CD8-positive, alpha-beta T cell (primary cell): ENCODE measurements at regions of chr18 and their contacts with region 1.

Region 1: DNA sequence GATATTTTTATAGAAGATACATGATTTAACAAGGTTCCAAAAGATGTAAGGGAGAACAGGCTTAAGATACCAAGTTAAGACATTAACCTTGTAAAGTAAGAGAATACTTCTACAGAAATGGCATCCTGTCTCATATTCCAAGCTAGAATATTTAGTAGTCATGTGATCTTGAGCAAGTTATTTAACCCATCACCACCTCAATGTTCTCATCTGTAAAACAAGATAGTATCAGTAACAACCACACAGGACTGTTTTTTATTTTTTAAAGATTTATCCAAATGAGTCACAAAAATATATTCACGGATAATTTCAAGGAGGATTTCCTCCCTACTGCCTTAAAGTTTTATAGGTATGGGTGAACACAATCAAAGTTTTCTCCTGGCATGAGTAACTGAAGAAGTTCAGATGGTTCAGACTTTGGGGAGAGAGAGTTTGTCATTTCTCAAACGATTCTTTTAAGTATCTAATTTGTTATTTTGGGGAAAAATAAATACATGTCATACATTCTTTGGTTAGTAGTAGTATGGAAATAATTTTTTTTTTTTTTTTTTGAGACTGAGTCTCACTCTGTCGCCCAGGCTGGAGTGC is 25.9 kb downstream of the ROCK1 start:
- DNase-seq: no peak
- ATAC-seq: no peak
- H3K4me3 ChIP-seq: no peak overlapping the region
- H3K4me3 Mint-ChIP-seq: peak overlapping the region; percentile 13
- H3K27ac ChIP-seq: no peak overlapping the region
- H3K27ac Mint-ChIP-seq: no peak overlapping the region
- H3K4me1 ChIP-seq: peaks cover 12% of the 10 kb centered on the region
- H3K4me1 Mint-ChIP-seq: peaks cover 81% of the 10 kb centered on the region
- H3K27me3 ChIP-seq: no peaks in the 10 kb centered on the region
- H3K27me3 Mint-ChIP-seq: no peaks in the 10 kb centered on the region
- CTCF ChIP-seq: no peak

Region 2: DNA sequence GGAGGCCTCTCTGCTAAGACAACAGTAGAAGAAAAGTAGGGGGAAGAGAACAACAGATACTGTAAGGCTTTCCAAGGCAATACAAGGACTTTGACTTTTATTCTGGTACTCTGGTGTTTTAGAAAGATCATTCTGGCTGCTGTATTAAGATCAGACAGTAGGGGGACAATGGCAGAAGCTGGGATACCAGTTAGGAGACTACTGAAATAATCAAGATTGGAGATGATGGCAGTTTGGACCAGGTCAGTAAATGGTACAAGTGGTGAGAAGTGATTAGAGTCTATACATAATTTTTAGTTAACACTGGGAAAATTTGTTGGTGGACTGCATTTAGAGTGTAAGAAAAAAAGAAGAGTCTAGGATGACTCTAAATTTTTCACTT is 113.8 kb before region 1 on chr18:
- CTCF ChIA-PET with region 1: no interaction called
- POLR2A ChIA-PET with region 1: no interaction called
- intact Hi-C with region 1: no loop called
- DNase-seq: peak in 2 of 9 experiments; percentile 22 to 39
- ATAC-seq: peak; percentile 63
- H3K4me3 ChIP-seq: no peak overlapping the region
- H3K4me3 Mint-ChIP-seq: no peak overlapping the region
- H3K27ac ChIP-seq: no peak overlapping the region
- H3K27ac Mint-ChIP-seq: no peak overlapping the region
- H3K4me1 ChIP-seq: no peaks in the 10 kb centered on the region
- H3K4me1 Mint-ChIP-seq: peaks cover 3% of the 10 kb centered on the region
- H3K27me3 ChIP-seq: no peaks in the 10 kb centered on the region
- H3K27me3 Mint-ChIP-seq: no peaks in the 10 kb centered on the region
- CTCF ChIP-seq: peak; percentile 64

Region 3: GRCh38 chr18:21074336-21075323 is 11.0 kb before region 1 on chr18:
- CTCF ChIA-PET with region 1: no interaction called
- POLR2A ChIA-PET with region 1: interaction called, 3 read pairs
- intact Hi-C with region 1: loop called in 1 of 2 experiments (anchors 2 kb)
- DNase-seq: no peak
- ATAC-seq: no peak
- H3K4me3 ChIP-seq: no peak overlapping the region
- H3K4me3 Mint-ChIP-seq: peak overlapping the region; percentile 45
- H3K27ac ChIP-seq: no peak overlapping the region
- H3K27ac Mint-ChIP-seq: peak overlapping the region; percentile 66
- H3K4me1 ChIP-seq: peaks cover 59% of the 10 kb centered on the region
- H3K4me1 Mint-ChIP-seq: peaks cover 77% of the 10 kb centered on the region
- H3K27me3 ChIP-seq: no peaks in the 10 kb centered on the region
- H3K27me3 Mint-ChIP-seq: no peaks in the 10 kb centered on the region
- CTCF ChIP-seq: no peak

Region 4: GRCh38 chr18:21117409-21118131 is 31.9 kb after region 1 on chr18:
- CTCF ChIA-PET with region 1: no interaction called
- POLR2A ChIA-PET with region 1: no interaction called
- intact Hi-C with region 1: loop called in 1 of 2 experiments (anchors 1 kb)
- DNase-seq: peak in 1 of 9 experiments; percentile 13
- ATAC-seq: no peak
- H3K4me3 ChIP-seq: no peak overlapping the region
- H3K4me3 Mint-ChIP-seq: no peak overlapping the region
- H3K27ac ChIP-seq: no peak overlapping the region
- H3K27ac Mint-ChIP-seq: no peak overlapping the region
- H3K4me1 ChIP-seq: peaks cover 1% of the 10 kb centered on the region
- H3K4me1 Mint-ChIP-seq: peaks cover under 1% of the 10 kb centered on the region
- H3K27me3 ChIP-seq: no peaks in the 10 kb centered on the region
- H3K27me3 Mint-ChIP-seq: no peaks in the 10 kb centered on the region
- CTCF ChIP-seq: no peak